Natural killer cell (primary cell): ENCODE measurements at regions of chr16 and their contacts with region 1.

Region 1: DNA sequence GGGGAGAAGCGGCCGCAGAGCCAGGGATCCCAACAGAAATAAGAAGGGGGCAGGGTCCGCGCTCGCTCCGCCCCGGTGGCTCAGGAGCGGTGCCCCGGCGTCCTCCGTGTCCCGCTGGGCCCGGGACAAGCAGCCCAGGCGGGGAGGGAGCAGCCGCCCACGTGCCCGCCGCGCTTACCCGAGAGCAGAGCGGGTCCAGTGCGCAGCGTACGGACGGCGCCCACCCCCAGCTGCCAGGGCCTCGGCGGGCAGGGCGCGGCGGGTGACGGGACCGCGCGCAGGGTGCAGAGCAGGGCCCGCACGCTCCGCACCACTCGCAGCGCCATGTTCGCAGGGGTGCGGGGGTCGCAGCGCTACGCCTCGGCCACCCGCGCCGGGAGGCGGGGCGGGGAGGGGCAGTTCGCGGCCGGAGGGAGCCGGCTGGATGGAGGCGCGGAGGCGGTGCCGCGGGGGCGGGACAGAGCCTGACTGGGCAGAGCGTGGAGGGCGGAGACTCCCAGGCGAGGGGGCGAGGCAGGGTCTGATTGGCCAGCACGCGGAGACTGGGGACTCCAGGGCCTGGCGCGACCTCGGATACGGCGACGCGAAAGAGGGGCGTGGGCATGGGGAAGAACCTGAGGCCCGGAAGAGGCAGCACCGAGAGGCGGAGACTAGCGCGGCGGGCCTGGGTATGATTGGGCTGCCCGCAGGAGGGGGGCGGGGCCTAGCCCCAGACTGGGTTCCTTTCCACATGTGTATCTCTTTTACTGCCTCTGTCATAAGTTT is at the start of gene GCSH:
- DNase-seq: peak; percentile 98 to 99
- ATAC-seq: peak; percentile 96 to 99 (median 96)
- H3K4me3 ChIP-seq: peak within 1 kb of the TSS; percentile 43
- H3K4me3 Mint-ChIP-seq: peak within 1 kb of the TSS; percentile 91
- H3K27ac ChIP-seq: peak within 1 kb of the TSS; percentile 19
- H3K27ac Mint-ChIP-seq: peak within 1 kb of the TSS; percentile 72 to 84
- H3K4me1 ChIP-seq: peaks cover 8% of the 10 kb centered on the region
- H3K4me1 Mint-ChIP-seq: peaks cover 6% of the 10 kb centered on the region in 2 donors
- H3K27me3 ChIP-seq: no peaks in the 10 kb centered on the region
- H3K27me3 Mint-ChIP-seq: no peaks in the 10 kb centered on the region
- CTCF ChIP-seq: no peak
- total RNA-seq, gene GCSH: 2.6 to 4.3 (median 2.7) TPM

Region 2: GRCh38 chr16:81035398-81035974 is 60.6 kb before region 1 on chr16 and contains the start of gene ATMIN:
- intact Hi-C with region 1: loop called (anchors 1 kb)
- DNase-seq: peak; percentile 89 to 95
- ATAC-seq: peak; percentile 98
- H3K4me3 ChIP-seq: peak within 1 kb of the TSS; percentile 38
- H3K4me3 Mint-ChIP-seq: peak within 1 kb of the TSS; percentile 86
- H3K27ac ChIP-seq: no peak within 1 kb of the TSS
- H3K27ac Mint-ChIP-seq: peak within 1 kb of the TSS; percentile 45 to 55
- H3K4me1 ChIP-seq: peaks cover 15% of the 10 kb centered on the region
- H3K4me1 Mint-ChIP-seq: peaks cover 24 to 26% of the 10 kb centered on the region in 2 donors
- H3K27me3 ChIP-seq: no peaks in the 10 kb centered on the region
- H3K27me3 Mint-ChIP-seq: no peaks in the 10 kb centered on the region
- CTCF ChIP-seq: peak; percentile 98
- total RNA-seq, gene ATMIN: 35.3 to 51.8 (median 39.9) TPM